Sigmoid colon (tissue), 7 donors: ENCODE measurements at regions of chr7 and their contacts with region 1.

Region 1: GRCh38 chr7:141701489-141702046 is 398 bp downstream of the DENND11 start:
- DNase-seq: peak; percentile 70
- H3K4me3 ChIP-seq: peak overlapping the region; percentile 66 to 99 (median 84)
- H3K27ac ChIP-seq: peak overlapping the region; percentile 81 to 90 (median 84)
- H3K4me1 ChIP-seq: peaks cover 0 to 20% (median 19%) of the 10 kb centered on the region in 4 donors
- H3K27me3 ChIP-seq: no peaks in the 10 kb centered on the region
- CTCF ChIP-seq: no peak
- EP300 ChIP-seq: no peak
- POLR2A ChIP-seq: no peak

Region 2: DNA sequence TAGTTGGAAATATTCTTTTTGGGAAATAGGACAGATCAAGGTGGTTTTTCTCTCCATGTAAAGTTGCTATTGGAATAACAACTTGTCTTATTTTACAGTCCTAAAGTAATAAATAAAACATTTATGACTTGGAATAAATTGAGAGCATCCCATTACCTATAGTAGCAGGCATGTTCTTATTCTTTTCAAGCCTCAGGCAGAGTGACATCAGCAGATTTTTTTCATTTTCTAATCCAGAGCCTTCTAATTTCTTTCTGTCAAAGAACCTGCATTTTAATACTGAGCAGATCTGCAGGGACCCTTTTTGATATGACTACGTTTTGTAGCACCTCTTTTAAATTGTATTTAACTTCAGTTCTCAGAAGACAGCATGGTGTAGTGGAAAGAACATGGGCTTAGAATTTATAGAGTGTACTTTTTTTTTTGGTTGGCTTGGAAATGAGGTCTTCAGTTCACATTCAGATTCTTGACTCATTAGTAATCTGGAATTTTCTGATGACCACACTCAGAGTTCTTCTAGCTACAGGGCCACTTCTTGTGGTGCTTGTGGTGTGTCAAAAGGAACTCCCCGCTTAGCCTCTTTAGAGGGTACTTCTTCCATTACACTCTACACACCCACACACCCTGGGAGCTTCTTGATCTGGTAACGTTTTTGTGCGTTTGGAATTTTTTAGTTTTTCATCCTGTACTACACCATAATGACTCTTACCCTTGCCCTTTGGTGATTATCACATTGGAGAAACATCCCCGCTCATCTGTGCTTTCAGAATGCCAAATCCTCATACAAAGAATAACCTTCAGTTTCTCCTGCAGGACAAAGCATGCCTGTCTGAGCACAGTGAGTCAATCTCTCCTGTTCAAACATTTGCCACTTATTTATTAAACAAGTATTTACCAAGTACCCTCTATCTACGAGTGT is 115.7 kb before region 1 on chr7:
- intact Hi-C with region 1: no loop called
- DNase-seq: no peak
- H3K4me3 ChIP-seq: no peak overlapping the region
- H3K27ac ChIP-seq: peak overlapping the region in 3 of 4 donors; percentile 18 to 29 (median 20)
- H3K4me1 ChIP-seq: peaks cover 0 to 16% (median 7%) of the 10 kb centered on the region in 4 donors
- H3K27me3 ChIP-seq: no peaks in the 10 kb centered on the region
- CTCF ChIP-seq: no peak
- EP300 ChIP-seq: no peak
- POLR2A ChIP-seq: no peak

Region 3: DNA sequence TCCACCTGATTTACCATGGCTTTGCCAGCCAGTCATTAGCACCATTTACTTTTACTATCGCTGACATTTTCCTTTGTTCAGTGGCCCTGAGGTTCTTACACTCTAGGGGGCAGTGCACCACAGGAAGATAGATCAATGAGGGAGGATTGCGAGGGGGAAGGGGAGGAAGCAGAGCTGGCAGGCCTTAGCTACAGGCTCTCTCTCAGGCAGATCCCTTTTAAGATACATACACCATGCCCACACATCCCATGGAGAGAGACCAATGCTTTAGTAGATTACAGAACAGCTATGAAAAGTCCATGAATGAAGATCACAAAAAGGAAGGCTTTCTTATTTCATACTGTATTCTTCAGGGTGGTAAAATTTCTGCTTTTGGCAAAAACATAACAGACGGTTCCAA is 47.0 kb before region 1 on chr7:
- intact Hi-C with region 1: loop called (anchors 5 kb)
- DNase-seq: no peak
- H3K4me3 ChIP-seq: no peak overlapping the region
- H3K27ac ChIP-seq: no peak overlapping the region
- H3K4me1 ChIP-seq: peaks cover 0 to 14% (median 7%) of the 10 kb centered on the region in 4 donors
- H3K27me3 ChIP-seq: no peaks in the 10 kb centered on the region
- CTCF ChIP-seq: peak in 3 of 4 experiments; percentile 43 to 55 (median 44)
- EP300 ChIP-seq: no peak
- POLR2A ChIP-seq: no peak

Region 4: GRCh38 chr7:141737834-141738591 is 36.4 kb after region 1 on chr7 and contains the start of gene SSBP1:
- intact Hi-C with region 1: loop called (anchors 2 kb)
- DNase-seq: peak; percentile 94
- H3K4me3 ChIP-seq: peak within 1 kb of the TSS; percentile 65 to 83 (median 70)
- H3K27ac ChIP-seq: peak within 1 kb of the TSS; percentile 81 to 87 (median 84)
- H3K4me1 ChIP-seq: peaks cover 0 to 34% (median 17%) of the 10 kb centered on the region in 4 donors
- H3K27me3 ChIP-seq: no peaks in the 10 kb centered on the region
- CTCF ChIP-seq: peak; percentile 43 to 82 (median 66)
- EP300 ChIP-seq: peak in 1 of 4 donors; percentile 37
- POLR2A ChIP-seq: peak; percentile 22 to 31
- total RNA-seq, gene SSBP1: 77.0 to 137 (median 121) TPM

Region 5: GRCh38 chr7:141837683-141838082 is 136.1 kb after region 1 on chr7:
- intact Hi-C with region 1: no loop called
- DNase-seq: no peak
- H3K4me3 ChIP-seq: no peak overlapping the region
- H3K27ac ChIP-seq: no peak overlapping the region
- H3K4me1 ChIP-seq: no peaks in the 10 kb centered on the region
- H3K27me3 ChIP-seq: no peaks in the 10 kb centered on the region
- CTCF ChIP-seq: no peak
- EP300 ChIP-seq: no peak
- POLR2A ChIP-seq: no peak

Region 6: GRCh38 chr7:141864775-141865447 is 163.3 kb after region 1 on chr7:
- intact Hi-C with region 1: no loop called
- DNase-seq: no peak
- H3K4me3 ChIP-seq: no peak overlapping the region
- H3K27ac ChIP-seq: no peak overlapping the region
- H3K4me1 ChIP-seq: no peaks in the 10 kb centered on the region
- H3K27me3 ChIP-seq: no peaks in the 10 kb centered on the region
- CTCF ChIP-seq: no peak
- EP300 ChIP-seq: no peak
- POLR2A ChIP-seq: no peak